Naive thymus-derived CD8-positive, alpha-beta T cell (primary cell): ENCODE measurements at regions of chr2 and their contacts with region 1.

Region 1: DNA sequence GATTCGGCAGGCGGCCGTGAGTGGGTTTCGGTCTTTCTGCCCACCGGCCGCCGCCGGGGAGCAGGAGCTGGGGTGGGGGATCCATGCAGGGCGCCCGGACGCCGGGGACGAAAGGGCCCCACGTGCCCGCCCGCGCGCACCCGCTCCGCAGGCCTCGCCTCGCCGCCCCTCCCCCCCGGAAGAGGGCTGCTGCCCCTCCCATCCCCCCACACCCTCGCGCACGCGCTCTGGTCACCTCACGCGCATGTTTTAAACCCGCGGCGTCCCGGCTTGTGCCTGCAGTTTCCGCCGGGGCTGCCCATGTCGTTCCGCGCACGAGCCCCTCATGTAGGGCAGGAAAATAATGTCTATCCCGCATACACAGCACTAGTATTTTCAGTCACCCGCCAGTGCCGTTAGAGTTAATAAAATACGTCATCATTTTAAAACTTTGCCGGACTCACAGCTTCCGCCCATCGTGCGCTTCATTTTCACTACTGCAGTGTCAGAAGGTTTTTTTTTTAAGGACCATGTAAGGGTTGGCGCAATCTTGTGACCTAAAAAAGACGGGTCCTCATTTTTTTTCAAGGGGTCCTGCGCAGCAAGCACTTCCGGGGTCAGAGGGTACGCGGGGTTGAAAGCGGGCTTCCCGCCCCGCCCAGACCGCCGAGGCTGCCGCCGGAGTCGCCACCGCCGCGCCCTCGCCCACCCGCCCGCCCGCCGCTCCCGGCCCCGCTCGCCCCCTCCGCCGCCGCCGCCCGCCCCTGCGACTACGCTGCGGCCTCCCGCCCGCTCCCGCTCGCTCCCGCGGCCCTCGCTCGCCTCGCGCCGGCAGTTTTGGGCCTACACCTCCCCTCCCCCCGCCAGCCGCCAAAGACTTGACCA is at the start of gene PCBP1:
- DNase-seq: peak; percentile 89 to 99 (median 98)
- ATAC-seq: peak; percentile 36 to 61
- H3K4me3 Mint-ChIP-seq: peak within 1 kb of the TSS; percentile 93 to 99 (median 97)
- H3K27ac Mint-ChIP-seq: peak within 1 kb of the TSS; percentile 100
- H3K4me1 Mint-ChIP-seq: peaks cover 35 to 71% (median 65%) of the 10 kb centered on the region in 4 donors
- H3K27me3 Mint-ChIP-seq: peaks cover 0 to 4% (median 0%) of the 10 kb centered on the region in 5 donors
- polyA plus RNA-seq, gene PCBP1: 159 to 218 (median 195) TPM

Region 2: DNA sequence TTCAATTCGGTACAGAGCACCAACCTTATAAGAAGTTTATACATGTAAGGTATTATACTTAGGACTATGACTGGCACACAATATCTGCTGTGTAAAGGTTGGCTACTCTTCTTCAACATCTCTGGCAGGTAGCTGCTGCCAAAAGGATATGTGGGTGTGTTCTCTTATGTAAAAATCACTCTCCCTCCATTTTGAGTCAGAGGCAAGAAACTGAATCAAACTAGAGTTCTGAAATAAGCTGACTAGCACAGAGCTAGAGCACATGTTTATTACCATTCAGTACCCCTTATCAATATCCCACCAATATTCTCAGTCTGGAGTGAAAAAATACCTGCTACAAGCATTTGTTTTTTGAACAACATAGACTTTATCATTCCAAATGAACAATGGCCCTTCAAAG is 37.8 kb before region 1 on chr2:
- POLR2A ChIA-PET with region 1: no interaction called
- DNase-seq: no peak
- ATAC-seq: no peak
- H3K4me3 Mint-ChIP-seq: no peak overlapping the region
- H3K27ac Mint-ChIP-seq: peak overlapping the region in 4 of 10 donors; percentile 47 to 60 (median 54)
- H3K4me1 Mint-ChIP-seq: peaks cover 2 to 21% (median 4%) of the 10 kb centered on the region in 4 donors
- H3K27me3 Mint-ChIP-seq: no peaks in the 10 kb centered on the region

Region 3: GRCh38 chr2:70062268-70062667 is 24.8 kb before region 1 on chr2:
- POLR2A ChIA-PET with region 1: interaction called, 239 read pairs
- DNase-seq: no peak
- ATAC-seq: no peak
- H3K4me3 Mint-ChIP-seq: no peak overlapping the region
- H3K27ac Mint-ChIP-seq: peak overlapping the region in 3 of 10 donors; percentile 60 to 76 (median 67)
- H3K4me1 Mint-ChIP-seq: peaks cover 15 to 29% (median 23%) of the 10 kb centered on the region in 4 donors
- H3K27me3 Mint-ChIP-seq: no peaks in the 10 kb centered on the region

Region 4: DNA sequence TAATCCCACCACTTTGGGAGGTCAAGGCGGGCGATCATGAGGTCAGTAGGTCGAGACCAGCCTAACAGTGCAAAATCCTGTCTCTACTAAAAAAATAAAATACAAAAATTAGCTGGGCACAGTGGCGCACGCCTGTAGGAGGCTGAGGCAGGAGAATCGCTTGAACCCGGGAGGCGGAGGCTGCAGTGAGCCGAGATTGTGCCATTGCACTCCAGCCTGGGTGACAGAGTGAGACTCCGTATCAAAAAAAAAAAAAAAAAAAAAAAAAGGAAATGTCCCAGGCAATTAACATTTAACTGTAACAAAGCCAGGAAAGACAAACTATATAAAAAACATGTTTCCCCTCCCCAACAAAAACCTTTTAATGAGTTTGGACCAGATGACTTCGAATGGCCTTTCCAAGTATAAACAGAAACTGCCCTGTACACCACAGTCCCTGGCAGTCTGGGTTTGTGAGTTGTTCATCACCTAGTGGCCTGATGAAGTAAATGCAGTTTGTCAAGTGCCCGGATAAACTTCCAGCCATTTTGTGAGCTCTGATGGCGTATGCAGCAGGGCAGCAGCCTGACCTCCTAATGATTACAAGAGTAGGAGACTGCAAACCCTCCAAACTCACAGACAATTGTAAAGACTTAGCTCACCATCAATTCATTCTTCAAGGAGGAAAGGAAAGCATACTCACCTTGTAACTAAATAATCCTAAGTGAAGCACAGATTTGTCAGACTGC is 16.4 kb before region 1 on chr2:
- POLR2A ChIA-PET with region 1: interaction called, 239 read pairs
- DNase-seq: peak in 9 of 10 donors; percentile 38 to 81 (median 65)
- ATAC-seq: peak; percentile 63 to 68
- H3K4me3 Mint-ChIP-seq: peak overlapping the region; percentile 54 to 86 (median 76)
- H3K27ac Mint-ChIP-seq: peak overlapping the region; percentile 86 to 100 (median 96)
- H3K4me1 Mint-ChIP-seq: peaks cover 17 to 57% (median 52%) of the 10 kb centered on the region in 4 donors
- H3K27me3 Mint-ChIP-seq: no peaks in the 10 kb centered on the region

Region 5: DNA sequence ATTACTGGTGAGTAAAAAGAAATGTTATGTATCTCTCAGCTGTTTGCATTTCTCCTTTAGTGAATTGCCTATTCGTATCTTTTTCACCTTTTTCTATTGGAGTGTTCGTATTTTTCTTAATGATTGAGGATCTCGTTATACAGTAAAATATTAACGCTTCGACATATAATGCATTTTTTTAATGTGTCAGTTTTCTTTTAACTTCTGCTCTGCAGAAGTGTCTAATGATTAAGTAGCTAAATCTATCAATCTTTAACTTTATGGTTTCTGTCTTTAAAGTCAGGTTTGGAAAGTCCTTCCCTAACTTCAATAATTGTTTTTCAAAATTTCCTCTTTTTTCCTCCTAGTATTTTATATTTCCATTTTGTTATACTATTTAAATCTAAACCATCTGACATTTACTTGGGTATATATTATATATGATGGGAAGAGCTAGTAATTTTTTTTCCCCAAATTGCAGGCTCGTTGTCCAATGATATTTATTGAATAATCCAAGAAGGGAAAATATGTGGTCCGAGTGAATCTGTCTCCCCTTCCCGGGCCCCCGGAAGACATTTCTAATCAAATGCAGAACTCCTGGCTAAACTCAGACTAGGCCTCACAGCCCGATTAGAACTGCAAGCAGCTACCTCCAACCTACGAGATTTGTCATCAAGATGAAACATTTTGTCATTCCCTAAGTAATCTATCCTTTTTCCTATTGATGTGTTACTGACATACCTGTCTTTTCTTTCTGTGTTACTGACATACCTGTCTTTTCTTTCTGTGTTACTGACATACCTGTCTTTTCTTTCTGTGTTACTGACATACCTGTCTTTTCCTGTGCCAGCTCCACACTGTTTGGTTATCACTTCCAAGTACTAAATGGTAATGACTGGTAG is 17.4 kb after region 1 on chr2:
- POLR2A ChIA-PET with region 1: interaction called, 621 read pairs
- DNase-seq: peak in 3 of 10 donors; percentile 45 to 69 (median 48)
- ATAC-seq: no peak
- H3K4me3 Mint-ChIP-seq: peak overlapping the region; percentile 76 to 89 (median 84)
- H3K27ac Mint-ChIP-seq: peak overlapping the region; percentile 91 to 99 (median 96)
- H3K4me1 Mint-ChIP-seq: peaks cover 32 to 59% (median 57%) of the 10 kb centered on the region in 4 donors
- H3K27me3 Mint-ChIP-seq: no peaks in the 10 kb centered on the region

Region 6: DNA sequence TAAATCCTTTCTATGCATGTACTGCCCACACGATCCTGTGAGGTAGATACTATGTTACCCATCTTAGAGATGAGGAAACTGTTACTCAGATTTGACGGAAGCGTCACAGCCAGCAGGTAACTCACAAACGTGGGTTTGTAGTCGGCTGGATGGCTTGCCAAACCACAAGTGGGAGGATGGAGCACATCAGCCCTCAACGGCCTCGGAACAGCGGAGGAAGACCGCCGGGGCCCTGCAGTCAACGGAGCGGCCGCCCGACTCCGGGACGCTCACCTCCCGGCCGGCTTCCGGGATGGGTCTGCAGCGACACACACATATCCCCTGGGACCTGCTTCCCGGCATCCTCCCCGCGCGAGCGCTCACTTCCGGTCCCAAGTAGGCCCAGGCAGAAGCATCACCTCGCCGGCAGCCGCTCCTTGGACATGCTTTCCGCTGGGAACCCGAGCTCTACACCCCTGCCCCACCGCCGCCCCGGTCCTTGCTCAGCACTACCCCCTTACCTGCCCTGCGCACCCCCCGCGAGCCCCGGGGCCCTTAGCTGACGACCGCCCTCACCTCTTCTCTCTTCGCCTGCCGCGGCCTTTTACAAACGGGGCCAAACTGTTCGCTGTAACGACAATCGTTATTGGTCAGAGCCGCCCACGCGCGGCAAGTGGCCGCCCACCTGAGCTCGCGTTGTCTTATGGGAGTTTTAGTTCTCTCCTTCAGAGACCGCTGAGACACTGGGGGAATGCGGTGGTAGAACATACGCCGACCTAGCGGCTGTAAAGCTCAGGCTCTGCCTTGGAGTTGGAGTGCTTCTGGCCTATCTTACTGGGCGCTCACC is 103.6 kb after region 1 on chr2 and contains the start of gene C2orf42:
- POLR2A ChIA-PET with region 1: interaction called, 40 read pairs
- DNase-seq: peak; percentile 83 to 98 (median 96)
- ATAC-seq: peak; percentile 84 to 85
- H3K4me3 Mint-ChIP-seq: peak within 1 kb of the TSS; percentile 88 to 99 (median 96)
- H3K27ac Mint-ChIP-seq: peak within 1 kb of the TSS; percentile 96 to 100 (median 99)
- H3K4me1 Mint-ChIP-seq: peaks cover 9 to 25% (median 21%) of the 10 kb centered on the region in 4 donors
- H3K27me3 Mint-ChIP-seq: no peaks in the 10 kb centered on the region
- polyA plus RNA-seq, gene C2orf42: 19.6 to 31.1 (median 19.9) TPM

Region 7: DNA sequence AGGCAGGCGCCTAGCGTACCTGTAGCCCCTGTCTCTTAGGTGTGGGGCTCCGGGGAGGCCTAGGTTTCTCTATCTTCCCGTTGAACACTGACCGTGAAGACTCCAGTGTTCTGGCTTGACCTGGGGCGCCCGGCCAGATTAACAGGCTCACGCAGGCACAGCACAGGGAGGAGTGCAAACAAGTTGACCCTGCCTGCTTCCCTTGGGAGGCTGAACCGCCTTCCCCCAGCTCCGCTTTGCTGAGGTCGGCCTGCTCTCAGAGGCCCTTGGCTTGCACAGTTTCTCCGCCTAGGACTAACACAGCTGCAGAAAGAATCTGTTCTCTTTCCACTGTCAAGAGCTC is 171.4 kb after region 1 on chr2:
- POLR2A ChIA-PET with region 1: interaction called, 18 read pairs
- DNase-seq: no peak
- ATAC-seq: no peak
- H3K4me3 Mint-ChIP-seq: peak overlapping the region; percentile 81 to 97 (median 90)
- H3K27ac Mint-ChIP-seq: peak overlapping the region; percentile 42 to 95 (median 84)
- H3K4me1 Mint-ChIP-seq: peaks cover 15 to 51% (median 38%) of the 10 kb centered on the region in 4 donors
- H3K27me3 Mint-ChIP-seq: no peaks in the 10 kb centered on the region